A549 (cell line): ENCODE measurements at regions of chr13 and their contacts with region 1.

Region 1: DNA sequence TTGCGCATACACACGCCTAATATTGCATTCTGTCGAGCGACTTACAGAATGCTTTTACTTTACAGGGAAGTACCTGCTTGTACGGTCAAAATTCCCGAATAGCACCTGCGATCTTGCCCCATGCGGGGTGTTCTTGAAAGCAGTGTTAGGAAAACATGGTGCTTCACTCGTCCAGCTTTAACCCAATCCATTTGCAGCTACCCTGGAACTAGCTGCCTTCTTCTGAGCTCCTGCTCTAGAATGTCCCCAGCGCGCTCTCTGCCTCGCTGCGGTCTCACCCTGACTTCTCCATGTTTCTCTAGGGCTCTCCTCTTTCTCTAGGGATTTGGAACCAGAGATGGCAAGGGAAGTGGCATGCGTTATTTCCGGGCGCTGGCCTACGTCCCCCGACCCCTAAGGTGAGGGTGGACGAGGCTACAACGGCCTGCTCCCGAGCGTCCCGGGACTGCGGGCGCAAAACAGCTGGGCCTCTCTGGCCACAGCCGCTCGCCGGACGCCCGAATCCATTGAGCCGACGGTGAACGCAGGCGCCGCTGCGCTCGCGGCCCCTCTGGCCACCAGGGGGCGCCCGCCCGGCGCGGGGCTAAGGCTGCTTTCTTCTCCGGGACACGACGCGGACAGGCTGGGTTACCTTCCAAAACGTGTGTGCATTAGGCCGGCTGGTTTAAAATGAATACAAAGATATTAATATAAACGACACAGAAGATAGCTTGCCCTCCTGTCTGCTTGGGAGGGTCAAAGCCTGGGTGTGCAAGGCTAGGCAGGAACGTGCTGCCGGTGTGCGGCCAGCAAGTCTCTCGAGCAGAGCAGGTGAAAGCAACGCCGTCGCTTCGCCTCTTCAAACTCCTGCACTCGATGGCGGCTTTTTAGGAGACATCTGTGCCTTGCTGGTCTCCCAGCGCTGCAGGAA is 1.8 kb upstream of the SPRY2 start:
- DNase-seq: peak in 1 of 2 experiments; percentile 72
- ATAC-seq: peak; percentile 44 to 75
- H3K4me3 ChIP-seq: peak overlapping the region; percentile 84
- H3K27ac ChIP-seq: peak overlapping the region; percentile 94 to 97
- H3K4me1 ChIP-seq: 0 out of 3 replicates have a peak, but pooled peaks cover 3% of the 10 kb centered on the region
- CTCF ChIP-seq: peak; percentile 84
- EP300 ChIP-seq: no peak
- POLR2A ChIP-seq: no peak
- RAD21 ChIP-seq: peak; percentile 60 to 81

Region 2: DNA sequence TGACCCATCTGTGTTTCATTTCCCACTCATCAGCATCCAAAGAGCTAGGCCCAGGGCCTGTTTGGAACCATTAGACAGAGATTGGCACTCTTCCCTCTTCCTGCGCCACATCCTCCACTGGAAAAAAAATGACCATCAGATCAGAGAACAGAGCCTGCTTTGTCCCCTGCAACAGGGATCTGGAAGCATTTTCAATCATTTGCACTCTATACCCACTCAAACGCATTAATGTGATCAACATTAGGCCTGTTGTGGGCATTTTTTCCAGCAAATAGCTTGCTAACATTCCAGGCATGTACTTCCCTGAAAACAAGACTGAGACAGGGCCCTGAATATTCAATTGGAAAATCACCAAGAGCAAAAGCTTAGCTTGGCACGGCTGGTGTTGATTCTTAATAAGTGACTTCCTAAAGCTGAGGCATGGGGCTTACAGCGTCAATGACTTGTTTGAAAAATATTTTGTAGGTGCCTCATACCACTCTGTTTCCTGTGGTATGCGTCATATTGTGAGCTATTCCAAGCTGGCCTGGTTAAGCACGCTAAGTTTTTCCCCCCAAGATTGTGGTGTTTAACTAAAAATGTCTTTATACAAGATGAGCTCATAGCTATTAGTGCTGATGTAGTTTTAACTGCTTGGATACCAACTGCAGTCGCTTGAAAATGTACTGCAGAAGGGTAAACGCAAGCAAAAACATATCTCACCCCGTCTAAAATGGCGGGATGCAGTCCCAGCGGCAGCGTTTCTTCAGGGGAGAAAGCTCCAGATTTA is 406.2 kb before region 1 on chr13:
- CTCF ChIA-PET with region 1: interaction called, 4 read pairs
- POLR2A ChIA-PET with region 1: interaction called, 15 read pairs
- DNase-seq: peak; percentile 78 to 95
- ATAC-seq: peak; percentile 98 to 99
- H3K4me3 ChIP-seq: no peak overlapping the region
- H3K27ac ChIP-seq: peak overlapping the region; percentile 91
- H3K4me1 ChIP-seq: peaks cover 18% of the 10 kb centered on the region
- CTCF ChIP-seq: no peak
- EP300 ChIP-seq: peak; percentile 85 to 89; a peak in 3 of 5 replicates
- POLR2A ChIP-seq: no peak
- RAD21 ChIP-seq: peak; percentile 46 to 53

Region 3: GRCh38 chr13:80361883-80362327 is 19.2 kb after region 1 on chr13:
- CTCF ChIA-PET with region 1: interaction called, 45 read pairs
- POLR2A ChIA-PET with region 1: interaction called, 4 read pairs
- DNase-seq: peak in 1 of 2 experiments; percentile 17
- ATAC-seq: peak in 1 of 2 experiments; percentile 53; a peak in 3 of 6 replicates
- H3K4me3 ChIP-seq: no peak overlapping the region
- H3K27ac ChIP-seq: no peak overlapping the region
- H3K4me1 ChIP-seq: 0 out of 3 replicates have a peak, but pooled peaks cover 5% of the 10 kb centered on the region
- CTCF ChIP-seq: no peak
- EP300 ChIP-seq: no peak
- POLR2A ChIP-seq: no peak
- RAD21 ChIP-seq: no peak

Region 4: DNA sequence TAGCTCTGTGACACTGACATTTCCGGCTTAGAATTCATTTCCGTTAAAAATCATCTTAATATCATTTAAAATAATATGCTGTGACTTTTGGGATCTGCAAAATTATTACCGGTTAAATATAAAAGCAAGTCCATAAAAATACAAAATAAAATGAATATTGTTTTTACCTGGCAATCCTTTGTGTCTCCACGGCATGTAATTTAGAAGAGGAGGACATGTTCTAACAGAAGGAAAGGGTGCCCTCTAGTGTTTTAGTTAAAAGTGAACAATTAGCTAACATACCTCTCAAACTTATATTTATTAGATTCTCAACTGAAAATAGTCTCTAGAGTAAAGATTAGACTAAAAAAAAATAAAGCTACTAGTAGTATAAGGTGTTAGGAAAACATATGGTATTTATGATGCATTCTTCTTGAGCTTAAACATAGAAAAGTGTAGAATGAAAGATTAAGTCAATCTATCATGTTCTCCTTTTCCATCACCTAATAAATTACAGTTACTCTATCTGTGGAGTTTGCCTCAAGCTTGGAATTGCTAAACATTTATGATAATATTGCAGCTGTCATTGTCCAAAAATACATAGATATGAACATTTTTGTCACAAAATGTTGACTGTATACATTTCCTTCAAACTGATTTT is 674.9 kb after region 1 on chr13:
- CTCF ChIA-PET with region 1: interaction called, 11 read pairs
- POLR2A ChIA-PET with region 1: no interaction called
- DNase-seq: peak; percentile 17 to 37
- ATAC-seq: peak in 1 of 2 experiments; percentile 63; a peak in 3 of 6 replicates
- H3K4me3 ChIP-seq: no peak overlapping the region
- H3K27ac ChIP-seq: no peak overlapping the region
- H3K4me1 ChIP-seq: no peaks in the 10 kb centered on the region
- CTCF ChIP-seq: peak; percentile 56
- EP300 ChIP-seq: no peak
- POLR2A ChIP-seq: no peak
- RAD21 ChIP-seq: peak; percentile 64 to 65